SK-N-SH (cell line): ENCODE measurements at regions of chr21 and their contacts with region 1.

Region 1: DNA sequence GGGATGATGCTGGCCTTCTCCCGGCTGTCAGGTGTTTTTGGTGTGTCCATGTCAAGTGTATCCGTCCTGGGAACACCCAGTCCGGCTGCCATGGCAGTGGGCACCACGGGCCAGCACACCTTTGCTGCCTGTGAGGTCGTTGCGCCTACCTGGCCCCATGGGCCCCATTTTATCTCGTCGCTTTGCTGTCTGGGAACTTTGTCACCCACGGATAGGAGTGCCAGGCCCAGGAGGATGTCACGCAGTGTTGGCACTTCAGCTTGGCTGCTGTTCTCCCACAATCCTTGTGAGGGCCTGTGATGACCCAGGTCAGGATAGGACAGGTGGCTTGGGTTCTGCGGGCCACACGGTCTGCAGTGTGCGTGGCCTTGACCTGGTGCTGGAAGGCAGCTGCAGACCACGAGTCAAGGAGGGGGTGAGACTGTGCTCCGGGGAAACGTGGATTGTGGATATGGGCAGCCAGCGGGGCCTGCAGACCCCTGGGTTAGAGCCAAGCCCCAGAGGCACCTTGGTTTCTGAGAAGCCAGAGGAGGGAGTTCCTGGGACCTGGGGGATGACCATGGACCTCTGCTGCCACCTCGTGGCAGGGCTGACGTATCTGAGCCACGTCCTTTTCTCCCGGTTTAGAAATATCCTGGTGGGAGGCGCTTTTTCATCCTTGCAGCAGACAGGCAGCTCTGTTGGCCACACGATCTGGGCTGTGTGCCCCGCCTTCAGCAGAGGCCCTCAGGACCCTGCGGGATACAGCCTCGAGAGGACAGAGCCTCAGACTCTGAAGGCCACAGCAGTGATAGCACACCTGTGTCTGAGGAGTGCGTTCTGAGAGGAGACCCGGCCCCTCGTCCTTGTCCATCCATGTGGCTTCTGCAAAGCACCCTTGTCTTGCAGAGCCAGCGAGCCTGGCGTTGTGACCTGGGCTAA is 161.1 kb upstream of the COL6A1 start:
- DNase-seq: peak; percentile 93
- H3K4me3 ChIP-seq: no peak overlapping the region
- H3K27ac ChIP-seq: peak overlapping the region in 1 of 2 experiments; percentile 99; a peak in 2 of 4 replicates
- H3K4me1 ChIP-seq: peaks cover 8 to 35% of the 10 kb centered on the region in 2 experiments; a peak in 2 of 4 replicates
- H3K27me3 ChIP-seq: no peaks in the 10 kb centered on the region
- CTCF ChIP-seq: peak; percentile 82
- EP300 ChIP-seq: peak in 1 of 2 experiments; percentile 44; a peak in 2 of 4 replicates
- RAD21 ChIP-seq: peak; percentile 98

Region 2: DNA sequence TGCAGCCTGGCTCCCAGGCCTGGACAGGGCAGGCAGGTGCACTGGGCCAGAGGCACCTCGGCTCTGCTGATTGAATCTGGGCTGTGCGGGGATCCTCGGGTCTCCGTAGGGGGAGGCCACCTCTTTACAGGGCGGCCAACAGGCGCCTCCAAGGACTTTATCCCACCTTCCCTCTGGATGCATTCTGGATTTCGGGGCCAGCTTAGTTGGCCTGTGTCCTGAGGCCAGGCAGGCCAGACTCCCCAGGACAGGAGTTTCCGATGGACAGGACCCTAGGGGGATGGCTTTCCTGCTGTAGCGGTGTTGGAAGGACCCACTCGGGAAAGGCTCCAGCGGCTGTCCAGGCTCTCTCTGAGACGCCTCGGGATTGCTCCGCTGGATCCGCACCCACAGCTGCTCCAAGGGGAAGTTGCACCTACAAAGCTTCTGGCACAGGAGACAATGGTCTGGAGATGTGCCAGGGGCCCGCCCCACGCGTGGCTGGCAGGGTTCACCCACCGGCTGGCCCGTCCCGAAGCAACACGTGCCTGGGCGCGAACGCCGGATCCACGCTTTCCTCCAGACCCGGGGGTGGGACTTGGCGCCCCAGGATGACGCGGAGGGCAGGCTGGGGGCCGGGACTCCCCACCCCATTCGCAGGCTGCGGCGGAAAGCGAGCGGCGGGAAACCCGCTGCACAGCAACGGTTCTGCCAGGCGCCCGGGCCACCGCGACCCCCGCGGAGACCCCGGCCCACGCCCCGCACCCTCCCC is 279.0 kb before region 1 on chr21:
- CTCF ChIA-PET with region 1: interaction called, 14 read pairs
- POLR2A ChIA-PET with region 1: no interaction called
- DNase-seq: peak; percentile 95
- H3K4me3 ChIP-seq: peak overlapping the region; percentile 64 to 66
- H3K27ac ChIP-seq: peak overlapping the region in 1 of 2 experiments; percentile 74; a peak in 2 of 4 replicates
- H3K4me1 ChIP-seq: peaks cover 0 to 36% of the 10 kb centered on the region in 2 experiments; a peak in 1 of 4 replicates
- H3K27me3 ChIP-seq: no peaks in the 10 kb centered on the region
- CTCF ChIP-seq: no peak
- EP300 ChIP-seq: no peak
- RAD21 ChIP-seq: no peak

Region 3: GRCh38 chr21:45596704-45597318 is 223.6 kb before region 1 on chr21:
- CTCF ChIA-PET with region 1: interaction called, 13 read pairs
- POLR2A ChIA-PET with region 1: no interaction called
- DNase-seq: peak; percentile 87
- H3K4me3 ChIP-seq: no peak overlapping the region
- H3K27ac ChIP-seq: no peak overlapping the region
- H3K4me1 ChIP-seq: peaks cover 0 to 9% of the 10 kb centered on the region in 2 experiments; a peak in 1 of 4 replicates
- H3K27me3 ChIP-seq: no peaks in the 10 kb centered on the region
- CTCF ChIP-seq: peak; percentile 78
- EP300 ChIP-seq: no peak
- RAD21 ChIP-seq: peak; percentile 75

Region 4: DNA sequence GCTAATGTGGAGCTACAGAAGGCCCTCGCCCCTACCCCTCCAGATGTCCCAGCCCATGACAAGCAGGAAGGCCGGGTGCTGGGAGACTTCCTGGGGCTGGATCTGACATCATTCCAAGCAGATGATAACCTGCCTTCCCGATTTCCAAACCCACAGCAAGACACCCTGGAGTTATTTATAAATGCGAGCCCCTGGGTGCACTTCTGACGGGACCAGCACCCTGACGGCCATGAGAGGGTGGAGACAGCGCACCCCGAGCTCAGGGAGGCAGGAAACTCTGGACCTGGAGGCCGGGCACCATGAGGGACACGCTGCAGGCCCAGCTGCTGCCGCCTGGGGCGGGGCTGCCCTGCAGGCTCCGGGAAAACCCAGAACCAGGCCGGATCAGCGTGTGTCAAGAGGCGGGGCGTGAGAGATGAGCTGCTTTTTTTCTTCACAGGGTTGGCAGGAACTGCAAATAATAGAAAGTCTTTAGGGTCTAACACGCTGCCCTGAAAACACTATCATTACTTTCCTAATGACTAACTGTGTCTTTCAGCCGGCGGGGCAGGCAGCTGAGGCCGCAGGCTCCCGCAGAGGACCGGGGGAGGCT is 179.4 kb before region 1 on chr21:
- CTCF ChIA-PET with region 1: interaction called, 17 read pairs
- POLR2A ChIA-PET with region 1: no interaction called
- DNase-seq: no peak
- H3K4me3 ChIP-seq: no peak overlapping the region
- H3K27ac ChIP-seq: peak overlapping the region in 1 of 2 experiments; percentile 82; a peak in 2 of 4 replicates
- H3K4me1 ChIP-seq: peaks cover 21 to 39% of the 10 kb centered on the region in 2 experiments
- H3K27me3 ChIP-seq: no peaks in the 10 kb centered on the region
- CTCF ChIP-seq: no peak
- EP300 ChIP-seq: no peak
- RAD21 ChIP-seq: no peak

Region 5: DNA sequence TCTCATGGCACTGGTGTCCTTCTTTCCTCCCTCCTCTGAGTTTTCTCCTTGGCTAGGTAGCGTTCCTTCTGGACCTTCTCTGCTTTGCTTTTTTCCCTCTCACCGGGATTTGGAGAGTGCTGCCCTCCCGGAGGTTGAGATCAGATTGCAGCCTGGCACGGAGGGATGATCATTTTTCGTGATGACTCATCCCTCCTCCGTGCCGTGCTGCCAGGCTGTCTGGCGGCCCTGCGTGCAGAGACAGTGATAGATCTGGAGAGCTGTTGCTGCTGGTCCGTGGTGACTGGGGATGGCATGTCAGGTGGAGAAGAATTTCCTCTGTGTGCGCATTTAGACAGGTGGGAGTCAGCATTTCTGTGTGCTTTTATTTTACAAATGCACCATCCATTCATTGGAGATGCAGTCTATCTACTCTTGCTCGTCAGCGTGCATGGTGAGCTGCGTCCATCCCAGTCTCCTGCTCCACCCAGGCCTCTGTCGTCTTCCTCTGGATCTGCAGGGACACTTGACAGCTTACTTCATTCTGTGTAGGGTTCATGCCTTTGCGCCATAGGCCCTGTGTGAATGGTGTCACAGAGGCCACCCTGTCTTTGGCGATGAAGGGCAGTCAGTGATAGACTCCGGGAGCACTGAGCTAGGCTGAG is 72.5 kb before region 1 on chr21:
- CTCF ChIA-PET with region 1: interaction called, 12 read pairs
- POLR2A ChIA-PET with region 1: interaction called, 3 read pairs
- DNase-seq: peak; percentile 85
- H3K4me3 ChIP-seq: peak overlapping the region; percentile 24 to 29; a peak in 1 of 4 replicates
- H3K27ac ChIP-seq: peak overlapping the region; percentile 70 to 96
- H3K4me1 ChIP-seq: peaks cover 13 to 55% of the 10 kb centered on the region in 2 experiments
- H3K27me3 ChIP-seq: no peaks in the 10 kb centered on the region
- CTCF ChIP-seq: no peak
- EP300 ChIP-seq: peak; percentile 39 to 81; a peak in 1 of 4 replicates
- RAD21 ChIP-seq: peak; percentile 49

Region 6: GRCh38 chr21:45831991-45832740 is 11.7 kb after region 1 on chr21:
- CTCF ChIA-PET with region 1: interaction called, 12 read pairs
- POLR2A ChIA-PET with region 1: no interaction called
- DNase-seq: no peak
- H3K4me3 ChIP-seq: no peak overlapping the region
- H3K27ac ChIP-seq: no peak overlapping the region
- H3K4me1 ChIP-seq: peaks cover 0 to 53% of the 10 kb centered on the region in 2 experiments; a peak in 1 of 4 replicates
- H3K27me3 ChIP-seq: no peaks in the 10 kb centered on the region
- CTCF ChIP-seq: no peak
- EP300 ChIP-seq: no peak
- RAD21 ChIP-seq: no peak